PC-9 (cell line): ENCODE measurements at regions of chr7 and their contacts with region 1.

Region 1: GRCh38 chr7:123191133-123191905 is 8.4 kb downstream of the SLC13A1 start:
- DNase-seq: peak; percentile 54
- H3K4me3 ChIP-seq: no peak overlapping the region
- H3K27ac ChIP-seq: peak overlapping the region; percentile 65
- H3K4me1 ChIP-seq: peaks cover 13% of the 10 kb centered on the region
- H3K27me3 ChIP-seq: no peaks in the 10 kb centered on the region
- CTCF ChIP-seq: no peak

Region 2: DNA sequence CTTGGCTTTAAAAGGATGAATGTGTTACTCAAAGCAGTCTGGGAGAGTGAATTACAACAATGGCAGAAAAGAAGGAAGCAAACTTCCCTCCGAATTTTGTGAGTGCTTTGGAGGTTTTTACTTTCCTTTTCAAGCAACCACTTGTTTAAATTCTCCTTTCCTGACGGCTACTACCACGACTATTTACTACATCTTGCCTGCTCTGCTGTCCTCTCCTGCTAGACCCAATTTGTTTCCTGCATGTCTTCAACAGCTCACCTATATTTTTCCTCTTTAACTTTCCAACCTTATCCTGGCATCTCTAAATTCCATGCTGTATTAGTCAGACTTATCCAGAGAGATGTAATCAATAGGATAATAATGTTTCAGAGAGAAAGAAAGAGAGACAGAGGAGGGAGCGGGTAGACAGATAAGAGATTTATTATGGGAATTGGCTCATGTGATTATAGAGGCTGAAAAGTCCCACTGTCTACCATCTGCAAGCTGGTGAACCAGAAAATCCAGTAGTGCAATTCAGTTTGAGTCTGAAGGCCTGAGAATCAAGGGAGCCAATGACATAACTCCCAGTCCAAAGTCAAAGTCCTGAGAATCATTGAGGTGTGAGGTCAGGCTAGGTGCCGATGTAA is 51.3 kb after region 1 on chr7:
- CTCF ChIA-PET with region 1: no interaction called
- POLR2A ChIA-PET with region 1: interaction called, 5 read pairs
- intact Hi-C with region 1: loop called (anchors 1 kb)
- DNase-seq: peak in 1 of 2 experiments; percentile 19
- H3K4me3 ChIP-seq: no peak overlapping the region
- H3K27ac ChIP-seq: no peak overlapping the region
- H3K4me1 ChIP-seq: peaks cover 4% of the 10 kb centered on the region; the same call in 1 of the 2 replicates
- H3K27me3 ChIP-seq: no peaks in the 10 kb centered on the region
- CTCF ChIP-seq: no peak

Region 3: GRCh38 chr7:124364283-124364682 is 1173.0 kb after region 1 on chr7:
- CTCF ChIA-PET with region 1: no interaction called
- POLR2A ChIA-PET with region 1: no interaction called
- intact Hi-C with region 1: no loop called
- DNase-seq: no peak
- H3K4me3 ChIP-seq: no peak overlapping the region
- H3K27ac ChIP-seq: no peak overlapping the region
- H3K4me1 ChIP-seq: no peaks in the 10 kb centered on the region
- H3K27me3 ChIP-seq: no peaks in the 10 kb centered on the region
- CTCF ChIP-seq: no peak